ENCODE measurements at regions of chr2 and their contacts with region 1.

Region 1: GRCh38 chr2:176140513-176141317 is 10.6 kb upstream of the HOXD4 start:
- DNase-seq: peak; percentile 64 to 72 (median 71)
- ATAC-seq: peak; percentile 91 to 97 (median 92)
- H3K4me3 ChIP-seq: peak overlapping the region; percentile 37 to 51 (median 51)
- H3K27ac ChIP-seq: no peak overlapping the region
- H3K4me1 ChIP-seq: peaks cover 0 to 9% (median 2%) of the 10 kb centered on the region in 4 donors
- H3K27me3 ChIP-seq: peaks cover 27 to 37% of the 10 kb centered on the region in 2 donors
- CTCF ChIP-seq: peak; percentile 76 to 94 (median 94)
- POLR2A ChIP-seq: no peak

Region 2: DNA sequence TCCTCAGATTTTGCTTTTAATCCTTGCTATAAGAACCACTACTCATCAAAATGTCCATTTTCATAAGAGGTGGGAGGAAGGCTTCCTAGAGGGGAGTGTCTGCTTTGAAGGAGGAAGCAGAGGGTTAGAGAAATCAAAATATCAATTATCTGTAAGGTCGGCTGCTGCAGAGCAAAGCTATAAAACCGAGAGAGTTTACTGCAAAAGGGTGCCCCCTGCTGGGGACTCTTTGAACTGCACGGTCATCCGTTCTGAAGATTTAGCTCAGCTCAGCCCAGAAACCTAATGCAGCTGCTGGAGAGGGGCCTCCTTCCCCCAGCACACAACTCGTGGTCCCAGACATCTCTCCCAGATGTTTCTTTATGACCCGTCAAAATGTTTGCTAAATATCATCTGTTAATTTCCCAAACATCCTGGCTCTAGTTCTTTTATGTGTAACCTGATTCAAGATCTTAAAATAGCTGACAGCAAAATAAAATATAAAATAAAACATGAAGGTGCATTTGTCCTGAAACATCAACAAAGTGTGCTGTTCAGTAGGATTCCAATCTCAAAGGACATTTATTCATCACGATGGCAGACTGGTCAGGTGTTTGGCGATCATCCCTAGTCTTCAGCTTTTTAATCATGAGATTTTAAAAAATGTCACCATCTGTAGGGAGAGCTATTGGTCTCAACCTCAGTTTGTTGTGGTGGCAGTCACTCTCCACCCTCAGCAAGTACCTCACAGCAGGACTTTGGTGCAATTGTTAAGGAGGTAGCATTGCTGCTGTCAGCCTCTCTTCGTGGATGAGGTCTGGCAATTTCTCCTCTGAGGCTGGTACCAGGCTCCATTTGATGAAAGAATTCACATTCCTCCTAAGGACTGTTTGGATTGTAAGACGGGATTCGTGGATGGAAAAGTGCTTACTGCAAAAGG is 314.4 kb after region 1 on chr2:
- intact Hi-C with region 1: loop called (anchors 5 to 10 kb)
- DNase-seq: peak; percentile 69 to 78 (median 75)
- ATAC-seq: peak; percentile 91 to 96 (median 93)
- H3K4me3 ChIP-seq: no peak overlapping the region
- H3K27ac ChIP-seq: no peak overlapping the region
- H3K4me1 ChIP-seq: peaks cover 0 to 8% (median 3%) of the 10 kb centered on the region in 4 donors
- H3K27me3 ChIP-seq: no peaks in the 10 kb centered on the region
- CTCF ChIP-seq: peak; percentile 84 to 96 (median 96)
- POLR2A ChIP-seq: no peak

Region 3: DNA sequence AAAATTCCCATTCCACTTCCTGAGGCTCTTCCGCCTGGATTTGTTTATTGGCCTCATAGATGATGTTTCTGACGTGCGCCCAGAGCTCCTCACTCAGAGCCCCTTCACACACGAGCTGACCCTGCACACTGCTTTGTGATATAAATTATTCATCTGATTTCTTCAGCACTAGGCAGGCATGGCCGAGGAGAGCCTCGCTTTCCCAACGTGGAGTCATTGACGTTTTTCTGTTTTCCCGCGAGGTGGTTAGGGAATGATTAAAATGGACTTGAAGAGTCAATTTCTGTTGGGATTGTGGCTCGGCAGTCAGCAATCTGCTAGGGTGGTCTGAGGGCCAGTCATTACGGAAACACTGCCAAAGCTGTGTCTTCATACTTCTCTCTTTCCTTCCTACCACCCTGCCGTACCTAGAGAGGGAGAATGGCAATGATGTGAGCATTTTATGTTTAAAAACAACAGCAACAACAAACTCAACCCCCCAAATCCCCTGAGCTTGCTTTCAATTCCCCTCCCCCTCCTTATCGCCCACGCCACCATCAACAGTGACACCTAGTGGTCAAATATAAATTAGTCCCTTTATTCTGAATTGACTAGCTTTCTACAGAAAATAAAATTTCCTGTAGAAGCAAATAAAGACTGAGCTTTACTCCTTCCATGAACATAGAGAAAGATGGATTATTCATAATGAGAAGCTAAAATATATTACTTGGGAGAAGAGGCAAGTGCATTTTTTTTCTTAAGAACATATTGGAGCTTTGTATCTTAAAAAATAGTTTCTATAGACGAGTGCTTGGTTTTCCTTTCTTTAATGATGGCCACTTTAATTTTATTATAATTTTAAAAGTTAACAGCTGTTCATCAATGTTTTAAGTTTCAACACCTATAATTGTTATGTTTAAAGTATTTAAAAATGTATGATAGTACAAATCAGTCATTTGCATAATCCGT is 413.7 kb after region 1 on chr2:
- intact Hi-C with region 1: loop called (anchors 5 to 10 kb)
- DNase-seq: no peak
- ATAC-seq: peak; percentile 77 to 87 (median 80)
- H3K4me3 ChIP-seq: peak overlapping the region; percentile 31 to 48 (median 48)
- H3K27ac ChIP-seq: peak overlapping the region in 1 of 3 donors; percentile 50
- H3K4me1 ChIP-seq: peaks cover 0 to 10% (median 0%) of the 10 kb centered on the region in 4 donors
- H3K27me3 ChIP-seq: no peaks in the 10 kb centered on the region
- CTCF ChIP-seq: peak; percentile 66 to 84 (median 73)
- POLR2A ChIP-seq: no peak

Region 4: GRCh38 chr2:176638167-176639015 is 497.7 kb after region 1 on chr2:
- intact Hi-C with region 1: loop called in 1 of 2 experiments (anchors 10 kb)
- DNase-seq: peak; percentile 68 to 70 (median 69)
- ATAC-seq: peak; percentile 96 to 99 (median 97)
- H3K4me3 ChIP-seq: peak overlapping the region; percentile 59 to 64 (median 60)
- H3K27ac ChIP-seq: no peak overlapping the region
- H3K4me1 ChIP-seq: peaks cover 0 to 6% (median 0%) of the 10 kb centered on the region in 4 donors
- H3K27me3 ChIP-seq: peaks cover 3 to 34% of the 10 kb centered on the region in 2 donors
- CTCF ChIP-seq: peak; percentile 71 to 86 (median 78)
- POLR2A ChIP-seq: no peak

Measured in right lobe of liver (tissue), 6 donors.